Aorta (tissue), 5 donors: ENCODE measurements at regions of chr2 and their contacts with region 1.

Region 1: DNA sequence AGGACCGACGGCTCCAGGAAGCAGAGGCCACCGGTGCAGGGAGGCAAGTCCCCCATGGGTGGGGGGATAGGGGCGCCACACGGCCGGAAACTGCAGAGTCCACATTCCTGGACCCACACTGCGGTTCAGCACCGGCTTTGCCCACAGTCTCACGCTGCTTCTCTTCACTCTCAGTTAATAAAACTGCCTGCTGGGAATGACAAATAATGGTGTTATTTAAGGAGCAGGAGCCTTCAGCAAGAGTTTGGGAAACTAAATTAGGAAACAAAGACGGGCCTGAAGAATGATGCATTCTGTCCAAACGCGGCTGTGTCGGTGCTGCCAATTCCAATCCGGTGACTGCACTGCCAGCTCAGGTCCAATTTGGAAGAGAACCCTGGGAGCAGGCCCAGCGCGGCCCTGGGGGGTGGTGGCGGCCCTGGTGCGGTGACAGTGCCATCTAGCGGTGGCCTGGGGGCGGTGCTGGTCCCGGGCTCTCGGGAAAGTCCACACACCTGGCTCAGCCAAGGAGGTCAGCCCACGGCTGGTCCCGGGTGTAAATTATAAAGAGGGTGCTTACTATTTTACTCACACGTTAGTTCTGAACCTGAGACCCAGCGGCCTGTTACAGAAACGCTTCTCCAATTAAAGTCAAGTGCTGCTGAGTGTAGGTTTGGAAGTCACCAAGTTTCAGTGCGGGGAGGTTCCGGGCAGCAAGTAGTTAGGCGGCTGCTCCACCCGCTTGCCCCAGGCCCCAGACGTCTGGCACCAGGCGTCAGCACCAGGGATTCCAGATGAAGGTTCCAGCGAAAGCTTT is 73.1 kb upstream of the PXDN start:
- DNase-seq: peak; percentile 94 to 98
- ATAC-seq: peak; percentile 95
- H3K4me3 ChIP-seq: no peak overlapping the region
- H3K27ac ChIP-seq: peak overlapping the region; percentile 70 to 95
- H3K4me1 ChIP-seq: no peaks in the 10 kb centered on the region
- H3K27me3 ChIP-seq: no peaks in the 10 kb centered on the region

Region 2: GRCh38 chr2:1591978-1592907 is 225.2 kb before region 1 on chr2:
- intact Hi-C with region 1: loop called (anchors 2 to 5 kb)
- DNase-seq: peak; percentile 88 to 92
- ATAC-seq: peak; percentile 79
- H3K4me3 ChIP-seq: no peak overlapping the region
- H3K27ac ChIP-seq: no peak overlapping the region
- H3K4me1 ChIP-seq: no peaks in the 10 kb centered on the region
- H3K27me3 ChIP-seq: no peaks in the 10 kb centered on the region

Region 3: GRCh38 chr2:1769703-1770422 is 47.6 kb before region 1 on chr2:
- intact Hi-C with region 1: loop called in 1 of 2 experiments (anchors 1 kb)
- DNase-seq: peak in 1 of 2 donors; percentile 79
- ATAC-seq: no peak
- H3K4me3 ChIP-seq: no peak overlapping the region
- H3K27ac ChIP-seq: no peak overlapping the region
- H3K4me1 ChIP-seq: no peaks in the 10 kb centered on the region
- H3K27me3 ChIP-seq: no peaks in the 10 kb centered on the region

Region 4: GRCh38 chr2:2057125-2057721 is 239.8 kb after region 1 on chr2:
- intact Hi-C with region 1: no loop called
- DNase-seq: peak; percentile 52 to 79
- ATAC-seq: peak; percentile 76
- H3K4me3 ChIP-seq: no peak overlapping the region
- H3K27ac ChIP-seq: no peak overlapping the region
- H3K4me1 ChIP-seq: no peaks in the 10 kb centered on the region
- H3K27me3 ChIP-seq: no peaks in the 10 kb centered on the region